Panc1 (cell line): ENCODE measurements at regions of chr6 and their contacts with region 1.

Region 1: GRCh38 chr6:53359072-53359842 is 10.5 kb upstream of the ELOVL5 start:
- DNase-seq: peak; percentile 61
- ATAC-seq: peak; percentile 96
- H3K4me3 ChIP-seq: peak overlapping the region; percentile 51 to 62
- H3K27ac ChIP-seq: peak overlapping the region; percentile 100
- H3K4me1 ChIP-seq: peaks cover 44% of the 10 kb centered on the region
- H3K27me3 ChIP-seq: no peaks in the 10 kb centered on the region
- CTCF ChIP-seq: no peak

Region 2: DNA sequence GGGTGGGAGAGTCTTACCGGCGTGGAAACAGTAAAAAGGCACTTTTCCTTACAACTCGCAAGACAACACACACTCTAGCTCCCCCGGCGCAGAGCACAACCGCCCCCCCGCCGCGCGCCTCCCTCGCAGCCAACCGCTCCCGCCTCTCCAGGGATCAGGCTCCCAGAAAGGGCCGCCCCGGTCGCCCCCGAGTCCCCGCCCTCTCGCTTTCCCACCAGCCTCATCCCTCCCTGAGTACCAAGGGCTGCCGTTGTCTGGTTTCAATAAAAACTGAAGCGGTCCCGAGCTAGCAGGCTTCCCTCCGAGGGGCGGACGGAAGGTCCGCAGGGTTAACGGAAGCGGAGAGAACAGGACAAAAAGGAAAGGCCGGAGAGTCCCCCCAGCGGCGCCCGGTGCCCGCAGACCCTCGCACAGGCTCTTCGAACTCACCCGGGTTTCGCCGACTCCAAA is 11.3 kb before region 1 on chr6:
- CTCF ChIA-PET with region 1: no interaction called
- POLR2A ChIA-PET with region 1: interaction called, 14 read pairs
- in situ Hi-C with region 1: no loop called
- intact Hi-C with region 1: no loop called
- DNase-seq: no peak
- ATAC-seq: peak; percentile 75
- H3K4me3 ChIP-seq: peak overlapping the region; percentile 90 to 91
- H3K27ac ChIP-seq: peak overlapping the region; percentile 96
- H3K4me1 ChIP-seq: peaks cover 40% of the 10 kb centered on the region
- H3K27me3 ChIP-seq: no peaks in the 10 kb centered on the region
- CTCF ChIP-seq: no peak